ENCODE measurements at regions of chr7 and their contacts with region 1.

Region 1: DNA sequence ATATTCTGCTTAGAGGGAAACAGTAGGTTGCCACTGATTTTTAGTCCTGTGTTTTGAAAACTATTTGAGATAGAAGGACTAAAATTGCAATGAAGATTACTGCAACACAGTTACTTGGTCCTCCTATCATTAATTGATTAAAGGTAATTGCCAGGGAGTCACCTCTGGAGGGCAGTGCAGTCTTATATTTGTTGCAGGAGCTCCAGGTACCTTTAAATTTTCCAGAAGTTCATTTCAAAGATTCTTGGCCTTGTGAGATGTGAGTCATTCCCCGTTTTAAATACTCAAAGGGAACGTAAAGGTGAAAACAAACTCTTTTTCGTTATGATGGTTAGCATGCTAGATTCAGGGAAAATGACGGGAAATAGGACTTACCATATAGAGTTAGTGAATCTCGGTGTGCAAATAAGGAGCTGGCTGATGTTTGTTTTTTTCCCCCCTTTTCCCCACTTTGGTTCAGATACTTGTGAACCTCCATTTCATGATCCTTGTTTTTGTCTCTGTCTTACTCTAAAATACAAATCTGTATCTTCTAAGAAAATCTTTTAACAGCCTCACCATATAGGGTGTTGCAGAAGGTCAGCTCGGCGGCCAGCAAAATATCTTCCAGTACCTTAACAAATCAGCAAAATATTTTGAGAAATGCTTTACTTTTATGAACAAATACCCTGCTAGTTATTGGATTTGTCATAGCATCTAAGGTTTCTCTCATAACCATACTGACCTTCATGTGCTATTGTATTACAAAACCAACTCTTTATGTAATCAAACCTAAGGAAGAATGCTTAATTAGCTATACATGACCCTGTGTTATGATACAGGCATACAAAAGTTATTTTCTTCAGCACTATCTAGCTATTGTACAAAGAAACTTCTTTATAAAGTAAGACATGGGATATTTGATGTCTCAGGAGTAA is 143.0 kb upstream of the HDAC9 start:
- DNase-seq: no peak
- ATAC-seq: peak; percentile 61 to 68
- H3K4me3 ChIP-seq: no peak overlapping the region
- H3K27ac ChIP-seq: no peak overlapping the region
- H3K4me1 ChIP-seq: no peaks in the 10 kb centered on the region
- H3K27me3 ChIP-seq: no peaks in the 10 kb centered on the region
- CTCF ChIP-seq: peak; percentile 64

Region 2: DNA sequence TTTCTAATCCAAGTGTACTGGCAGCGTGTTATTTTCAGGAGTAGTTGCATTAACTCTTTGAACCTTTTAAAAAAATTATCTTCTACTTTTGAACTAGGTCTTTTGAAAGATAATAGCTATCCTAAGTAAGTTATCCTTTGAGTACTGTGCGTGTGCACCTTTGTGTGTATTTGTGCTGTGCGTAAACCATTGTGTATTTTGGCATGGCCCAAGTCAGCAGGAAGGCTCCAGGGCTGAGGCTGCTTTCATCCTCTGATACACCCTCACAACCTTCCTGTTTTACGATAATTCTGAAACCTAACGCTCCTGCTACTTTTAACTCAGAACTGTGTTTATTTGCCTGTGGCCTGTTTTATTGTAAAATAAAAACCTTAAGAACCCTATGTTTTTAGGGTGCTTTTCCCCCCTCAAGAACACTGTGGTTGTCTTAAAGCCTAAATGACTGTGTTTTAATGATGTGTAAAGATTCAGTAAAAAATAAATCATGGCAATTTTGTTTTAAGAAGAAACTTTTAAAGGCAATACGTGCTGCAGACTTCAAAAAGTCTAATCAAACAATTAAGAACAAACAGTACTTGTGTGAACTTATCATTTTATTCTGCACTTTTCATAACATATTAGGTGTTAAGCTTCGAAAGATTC is 200.5 kb after region 1 on chr7:
- intact Hi-C with region 1: no loop called
- DNase-seq: no peak
- ATAC-seq: no peak
- H3K4me3 ChIP-seq: no peak overlapping the region
- H3K27ac ChIP-seq: no peak overlapping the region
- H3K4me1 ChIP-seq: no peaks in the 10 kb centered on the region
- H3K27me3 ChIP-seq: no peaks in the 10 kb centered on the region
- CTCF ChIP-seq: no peak

Region 3: GRCh38 chr7:18570890-18571478 is 218.4 kb after region 1 on chr7:
- intact Hi-C with region 1: loop called (anchors 10 kb)
- DNase-seq: no peak
- ATAC-seq: no peak
- H3K4me3 ChIP-seq: no peak overlapping the region
- H3K27ac ChIP-seq: no peak overlapping the region
- H3K4me1 ChIP-seq: no peaks in the 10 kb centered on the region
- H3K27me3 ChIP-seq: no peaks in the 10 kb centered on the region
- CTCF ChIP-seq: peak; percentile 39

Measured in lower lobe of right lung (tissue), 2 donors.